ENCODE measurements at regions of chr1 and their contacts with region 1.

Region 1: DNA sequence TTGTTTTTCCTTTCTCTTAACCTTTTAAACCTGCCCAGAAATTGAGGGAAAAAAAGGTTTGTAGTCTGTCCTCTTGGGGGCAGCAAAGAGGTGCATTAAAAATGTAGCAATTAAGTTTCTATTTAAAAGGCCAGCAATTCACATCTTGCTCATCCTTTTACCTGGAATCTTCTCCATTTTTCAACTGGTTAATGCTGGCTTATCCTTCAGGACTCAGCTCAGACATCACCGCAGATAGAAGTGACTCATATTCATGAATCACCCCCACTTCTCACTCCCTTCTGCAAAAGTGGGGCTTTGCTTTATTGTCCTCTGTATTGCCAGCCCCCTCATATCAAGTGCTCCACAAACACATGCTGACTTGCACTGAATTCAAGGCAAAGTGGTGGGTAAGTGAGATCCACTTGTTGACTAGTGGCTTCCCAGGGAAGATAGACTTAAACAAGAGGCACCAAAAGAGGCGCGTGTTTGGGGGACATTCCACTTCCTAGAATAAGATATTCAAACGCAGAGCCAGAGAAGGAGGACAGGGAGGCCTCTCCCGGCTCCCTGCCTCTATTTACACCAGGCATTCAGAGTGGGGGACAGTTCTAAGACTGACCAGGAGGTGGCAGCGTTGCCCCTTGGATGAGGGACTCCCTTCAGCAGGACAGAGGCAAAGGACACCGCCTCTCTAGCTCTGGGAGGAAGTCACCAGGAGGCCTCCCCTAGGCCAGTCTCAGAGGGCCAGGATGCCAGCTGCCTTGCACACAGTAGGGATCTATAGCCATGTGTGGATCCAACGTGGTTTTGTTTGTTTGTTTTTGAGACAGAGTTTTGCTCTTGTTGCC is 23.2 kb upstream of the ZNF648 start:
- DNase-seq: peak; percentile 84 to 88 (median 88)
- ATAC-seq: peak; percentile 95
- H3K4me3 ChIP-seq: no peak overlapping the region
- H3K27ac ChIP-seq: no peak overlapping the region
- H3K4me1 ChIP-seq: peaks cover 10 to 20% of the 10 kb centered on the region in 2 experiments; a peak in 4 of 5 replicates
- H3K27me3 ChIP-seq: peaks cover 15 to 27% of the 10 kb centered on the region in 2 experiments; a peak in 4 of 5 replicates
- CTCF ChIP-seq: peak; percentile 90 to 97 (median 95)
- EP300 ChIP-seq: no peak
- POLR2A ChIP-seq: no peak
- RAD21 ChIP-seq: peak; percentile 98 to 99

Region 2: DNA sequence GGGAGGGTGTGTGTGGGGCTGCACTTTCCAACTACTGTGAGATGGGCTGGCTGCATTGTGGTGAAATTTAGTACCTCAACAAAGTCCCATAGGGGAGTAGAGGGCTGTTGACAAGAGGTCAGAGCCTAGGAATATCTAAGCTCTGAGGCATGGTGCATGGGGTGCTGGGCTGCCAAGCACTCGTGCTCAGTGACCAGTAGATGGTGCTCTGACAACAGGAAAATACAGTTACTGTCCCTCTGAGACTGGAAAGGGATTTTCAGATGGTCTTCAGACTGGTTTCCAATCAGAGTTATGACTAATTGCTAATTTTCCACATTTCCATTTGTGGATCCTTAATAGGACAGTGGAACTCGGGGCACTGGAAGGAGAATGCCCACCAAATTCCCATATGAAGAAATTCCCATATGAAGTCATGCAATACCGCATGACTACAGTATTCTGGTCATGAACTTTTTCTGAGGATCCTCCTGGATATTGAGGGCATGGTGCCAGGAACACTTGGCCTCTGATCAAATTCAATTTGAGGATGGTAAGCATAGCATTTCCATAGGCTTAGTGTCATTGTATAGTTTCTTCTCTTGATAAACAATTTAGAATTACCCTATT is 605.5 kb before region 1 on chr1:
- CTCF ChIA-PET with region 1: interaction called, 5 read pairs
- POLR2A ChIA-PET with region 1: no interaction called
- in situ Hi-C with region 1: no loop called
- intact Hi-C with region 1: loop called (anchors 1 kb)
- DNase-seq: peak; percentile 70 to 73 (median 71)
- ATAC-seq: peak; percentile 92
- H3K4me3 ChIP-seq: no peak overlapping the region
- H3K27ac ChIP-seq: no peak overlapping the region
- H3K4me1 ChIP-seq: peaks cover 0 to 10% of the 10 kb centered on the region in 2 experiments; a peak in 2 of 5 replicates
- H3K27me3 ChIP-seq: peaks cover 16 to 32% of the 10 kb centered on the region in 2 experiments
- CTCF ChIP-seq: peak; percentile 73 to 89 (median 89)
- EP300 ChIP-seq: no peak
- POLR2A ChIP-seq: no peak
- RAD21 ChIP-seq: peak; percentile 88 to 91

Region 3: DNA sequence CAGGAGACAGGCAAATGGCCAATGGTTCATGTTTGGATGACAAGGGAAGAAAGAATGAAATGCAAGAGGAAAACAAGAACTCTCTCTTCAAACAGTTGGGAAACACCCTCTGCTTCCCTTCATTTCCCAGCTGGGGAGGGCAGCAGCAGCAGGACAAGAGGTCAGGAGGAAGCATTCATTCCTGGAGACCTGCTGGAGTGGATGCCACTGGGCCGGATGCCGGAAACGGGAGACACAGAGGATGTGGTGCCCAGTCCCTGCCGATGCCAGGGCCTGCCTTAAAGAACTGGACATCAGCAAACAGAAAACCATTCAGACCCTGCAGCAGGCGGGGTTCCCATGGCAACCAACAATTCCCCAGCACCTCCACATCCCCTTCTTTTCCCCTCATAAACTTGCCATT is 79.1 kb after region 1 on chr1:
- CTCF ChIA-PET with region 1: no interaction called
- POLR2A ChIA-PET with region 1: no interaction called
- in situ Hi-C with region 1: no loop called
- intact Hi-C with region 1: no loop called
- DNase-seq: no peak
- ATAC-seq: no peak
- H3K4me3 ChIP-seq: no peak overlapping the region
- H3K27ac ChIP-seq: no peak overlapping the region
- H3K4me1 ChIP-seq: no peaks in the 10 kb centered on the region
- H3K27me3 ChIP-seq: peaks cover 0 to 2% of the 10 kb centered on the region in 2 experiments; a peak in 1 of 5 replicates
- CTCF ChIP-seq: no peak
- EP300 ChIP-seq: no peak
- POLR2A ChIP-seq: no peak
- RAD21 ChIP-seq: no peak

Region 4: GRCh38 chr1:182198049-182198501 is 113.4 kb after region 1 on chr1:
- CTCF ChIA-PET with region 1: interaction called, 3 read pairs
- POLR2A ChIA-PET with region 1: interaction called, 3 read pairs
- in situ Hi-C with region 1: no loop called
- intact Hi-C with region 1: loop called (anchors 1 kb)
- DNase-seq: peak in 3 of 4 experiments; percentile 32 to 49 (median 48)
- ATAC-seq: peak; percentile 78
- H3K4me3 ChIP-seq: no peak overlapping the region
- H3K27ac ChIP-seq: no peak overlapping the region
- H3K4me1 ChIP-seq: peaks cover 0 to 11% of the 10 kb centered on the region in 2 experiments; a peak in 3 of 5 replicates
- H3K27me3 ChIP-seq: no peaks in the 10 kb centered on the region
- CTCF ChIP-seq: peak; percentile 57 to 80 (median 67)
- EP300 ChIP-seq: no peak
- POLR2A ChIP-seq: no peak
- RAD21 ChIP-seq: peak; percentile 60 to 84

Region 5: DNA sequence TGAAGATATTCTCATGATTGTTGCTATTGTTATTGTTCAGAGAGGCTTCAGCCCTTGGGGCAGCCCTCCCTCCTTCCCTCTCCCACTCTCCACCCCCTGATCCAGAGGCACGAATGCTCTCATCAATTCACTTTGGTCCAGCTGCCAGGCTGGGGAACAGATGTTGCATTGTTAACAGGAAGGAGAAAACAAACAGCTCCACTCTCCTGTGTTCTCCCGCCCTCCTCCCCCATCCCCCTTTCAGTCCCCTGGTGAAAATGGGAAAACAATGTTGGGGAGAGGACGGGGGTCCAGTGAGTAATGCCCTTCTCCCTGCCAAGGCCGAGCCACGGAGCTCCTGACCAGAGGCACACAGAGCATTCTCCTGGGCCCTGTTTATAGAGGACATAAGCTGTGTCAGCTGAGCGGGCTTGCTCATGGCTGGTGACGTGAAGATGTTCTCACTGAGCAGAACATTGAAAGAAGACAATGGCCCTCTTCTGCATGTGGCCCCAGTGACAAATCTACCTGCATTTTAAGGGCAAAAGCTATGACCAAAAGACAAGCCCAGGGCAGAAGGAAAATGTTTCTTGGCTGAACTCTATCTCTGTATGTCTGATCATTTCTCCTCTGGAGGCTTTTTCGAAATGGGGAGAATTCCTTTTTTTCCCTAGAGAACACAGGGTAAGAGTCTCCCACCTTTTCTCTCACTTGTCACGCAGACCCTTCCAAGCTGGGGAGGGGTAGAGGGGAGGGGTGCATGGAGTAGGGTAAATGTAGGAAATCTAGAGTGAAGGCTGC is 195.2 kb after region 1 on chr1:
- CTCF ChIA-PET with region 1: no interaction called
- POLR2A ChIA-PET with region 1: no interaction called
- in situ Hi-C with region 1: no loop called
- intact Hi-C with region 1: no loop called
- DNase-seq: no peak
- ATAC-seq: peak; percentile 24; the same call in 2 of the 3 replicates
- H3K4me3 ChIP-seq: no peak overlapping the region
- H3K27ac ChIP-seq: no peak overlapping the region
- H3K4me1 ChIP-seq: peaks cover 3% of the 10 kb centered on the region in 2 experiments; a peak in 3 of 5 replicates
- H3K27me3 ChIP-seq: no peaks in the 10 kb centered on the region
- CTCF ChIP-seq: no peak
- EP300 ChIP-seq: no peak
- POLR2A ChIP-seq: no peak
- RAD21 ChIP-seq: no peak

Region 6: GRCh38 chr1:182397771-182398393 is 313.2 kb after region 1 on chr1:
- CTCF ChIA-PET with region 1: interaction called, 42 read pairs
- POLR2A ChIA-PET with region 1: interaction called, 8 read pairs
- in situ Hi-C with region 1: loop called (anchors 5 kb)
- intact Hi-C with region 1: loop called (anchors 1 kb)
- DNase-seq: no peak
- ATAC-seq: no peak
- H3K4me3 ChIP-seq: no peak overlapping the region
- H3K27ac ChIP-seq: no peak overlapping the region
- H3K4me1 ChIP-seq: peaks cover 0 to 22% of the 10 kb centered on the region in 2 experiments; a peak in 3 of 5 replicates
- H3K27me3 ChIP-seq: no peaks in the 10 kb centered on the region
- CTCF ChIP-seq: no peak
- EP300 ChIP-seq: no peak
- POLR2A ChIP-seq: no peak
- RAD21 ChIP-seq: no peak

Region 7: GRCh38 chr1:182601416-182601786 is 516.7 kb after region 1 on chr1:
- CTCF ChIA-PET with region 1: interaction called, 11 read pairs
- POLR2A ChIA-PET with region 1: no interaction called
- in situ Hi-C with region 1: loop called (anchors 10 kb)
- intact Hi-C with region 1: no loop called
- DNase-seq: peak; percentile 69 to 90 (median 75)
- ATAC-seq: peak; percentile 48
- H3K4me3 ChIP-seq: no peak overlapping the region
- H3K27ac ChIP-seq: no peak overlapping the region
- H3K4me1 ChIP-seq: peaks cover 9 to 13% of the 10 kb centered on the region in 2 experiments; a peak in 4 of 5 replicates
- H3K27me3 ChIP-seq: peaks cover 2 to 21% of the 10 kb centered on the region in 2 experiments; a peak in 3 of 5 replicates
- CTCF ChIP-seq: peak; percentile 89 to 96 (median 90)
- EP300 ChIP-seq: no peak
- POLR2A ChIP-seq: no peak
- RAD21 ChIP-seq: peak; percentile 98 to 99

Region 8: GRCh38 chr1:182806015-182806678 is 721.4 kb after region 1 on chr1:
- CTCF ChIA-PET with region 1: interaction called, 15 read pairs
- POLR2A ChIA-PET with region 1: no interaction called
- in situ Hi-C with region 1: no loop called
- intact Hi-C with region 1: no loop called
- DNase-seq: peak; percentile 47 to 68 (median 54)
- ATAC-seq: peak; percentile 94
- H3K4me3 ChIP-seq: no peak overlapping the region
- H3K27ac ChIP-seq: no peak overlapping the region
- H3K4me1 ChIP-seq: no peaks in the 10 kb centered on the region
- H3K27me3 ChIP-seq: no peaks in the 10 kb centered on the region
- CTCF ChIP-seq: peak; percentile 74 to 78 (median 77)
- EP300 ChIP-seq: no peak
- POLR2A ChIP-seq: no peak
- RAD21 ChIP-seq: peak in 1 of 2 experiments; percentile 81; a peak in 3 of 4 replicates

Measured in K562 (cell line).